Ascending aorta (tissue), 2 donors: ENCODE measurements at regions of chrX and their contacts with region 1.

Region 1: DNA sequence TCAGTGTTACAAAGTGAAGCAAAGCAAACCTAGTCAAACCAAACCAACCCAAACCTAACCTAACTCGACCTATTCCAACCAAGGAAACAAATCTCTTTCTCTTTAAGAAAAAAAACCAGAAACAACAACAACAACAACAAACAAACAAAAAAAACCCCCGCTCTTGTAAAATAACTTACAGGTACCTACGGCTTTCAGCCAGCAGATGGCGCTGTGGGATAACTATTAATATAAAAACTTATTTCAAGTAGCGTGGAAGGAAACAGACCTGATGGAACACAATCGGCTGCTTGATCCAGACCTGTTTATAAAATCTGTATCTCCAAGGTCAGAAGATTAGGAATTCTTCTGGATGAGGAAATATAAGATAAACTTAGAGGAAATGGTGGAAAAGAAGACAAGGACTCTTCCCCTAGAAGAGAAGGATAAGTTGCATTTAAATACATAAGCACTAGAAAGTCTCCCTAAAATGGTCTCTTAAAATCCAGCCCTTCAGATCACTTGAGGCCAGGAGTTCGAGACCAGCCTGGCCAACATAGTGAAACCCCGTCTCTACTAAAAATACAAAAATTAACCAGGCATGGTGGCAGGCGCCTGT is 34.4 kb upstream of the CDKL5 start:
- DNase-seq: peak in 1 of 2 donors; percentile 84
- H3K4me3 ChIP-seq: no peak overlapping the region
- H3K27ac ChIP-seq: no peak overlapping the region
- H3K4me1 ChIP-seq: no peaks in the 10 kb centered on the region
- H3K27me3 ChIP-seq: no peaks in the 10 kb centered on the region
- CTCF ChIP-seq: peak; percentile 62 to 79 (median 63)

Region 2: DNA sequence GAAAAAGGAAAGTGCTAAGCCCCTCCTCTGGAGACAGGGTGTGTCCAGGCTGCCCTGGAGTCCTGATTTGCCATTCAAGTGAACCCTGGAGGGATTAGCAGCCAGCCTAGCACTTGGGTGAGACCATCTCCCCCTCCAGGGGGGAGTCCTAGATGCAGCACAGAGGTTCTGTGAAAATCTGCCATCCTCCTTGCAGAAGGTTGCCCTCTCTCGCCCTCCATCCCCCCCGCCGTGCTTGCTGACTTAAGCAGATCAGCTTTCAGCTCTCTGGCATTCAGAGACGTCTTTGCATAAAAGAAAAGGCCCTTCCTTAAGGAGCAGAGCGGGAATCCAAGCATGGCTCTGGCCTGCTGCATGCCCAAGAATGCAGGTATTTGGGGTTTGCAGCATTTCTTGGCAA is 755.8 kb before region 1 on chrX:
- intact Hi-C with region 1: no loop called
- DNase-seq: no peak
- H3K4me3 ChIP-seq: no peak overlapping the region
- H3K27ac ChIP-seq: no peak overlapping the region
- H3K4me1 ChIP-seq: peaks cover 3 to 4% of the 10 kb centered on the region in 2 donors
- H3K27me3 ChIP-seq: no peaks in the 10 kb centered on the region
- CTCF ChIP-seq: no peak

Region 3: GRCh38 chrX:18895189-18895951 is 504.3 kb after region 1 on chrX:
- intact Hi-C with region 1: loop called (anchors 2 kb)
- DNase-seq: peak in 1 of 2 donors; percentile 89
- H3K4me3 ChIP-seq: peak overlapping the region in 1 of 2 donors; percentile 36
- H3K27ac ChIP-seq: peak overlapping the region; percentile 84 to 85
- H3K4me1 ChIP-seq: peaks cover 0 to 15% of the 10 kb centered on the region in 2 donors
- H3K27me3 ChIP-seq: no peaks in the 10 kb centered on the region
- CTCF ChIP-seq: peak; percentile 61 to 78 (median 63)

Region 4: DNA sequence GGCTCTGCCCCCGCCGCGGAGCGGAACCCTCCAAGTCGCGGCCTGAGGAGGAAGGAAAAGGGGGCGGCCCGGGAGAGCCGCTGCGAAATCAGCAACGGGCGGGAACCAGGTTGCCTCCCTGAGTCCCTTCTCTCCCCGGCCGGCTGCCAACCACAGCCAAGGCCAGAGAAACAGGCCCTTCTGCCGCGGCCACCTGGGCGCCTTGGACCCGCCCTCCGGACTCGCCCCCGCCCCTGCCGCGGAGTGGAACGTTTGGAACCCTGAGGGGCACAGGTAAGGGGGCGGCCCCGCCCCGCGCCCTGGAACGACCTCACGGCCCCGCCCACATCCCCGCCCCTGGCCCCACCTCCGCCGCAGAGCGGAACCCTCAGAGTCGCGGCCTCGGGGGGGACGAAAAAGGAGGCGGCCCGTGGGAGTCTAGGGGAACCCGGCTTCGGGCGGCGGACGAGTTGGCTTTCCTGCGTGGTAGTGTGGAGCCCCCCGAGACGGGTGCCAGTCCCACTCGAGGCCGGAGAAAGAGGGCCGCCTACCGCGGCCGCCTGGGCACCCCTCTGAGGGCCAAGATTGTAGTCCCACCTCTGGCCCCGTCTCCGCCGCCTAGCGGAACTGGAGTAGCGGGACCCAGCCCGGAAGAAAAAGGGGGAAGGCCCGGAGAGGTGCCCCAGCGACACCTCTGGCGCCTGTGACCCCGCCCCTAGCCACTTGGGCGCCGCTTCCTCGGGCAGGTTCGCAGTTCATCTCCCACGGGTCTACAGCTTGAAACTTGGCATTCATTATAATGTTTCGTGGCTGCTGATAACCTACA is 593.5 kb after region 1 on chrX:
- intact Hi-C with region 1: loop called (anchors 10 kb)
- DNase-seq: peak; percentile 13 to 85
- H3K4me3 ChIP-seq: peak overlapping the region; percentile 68 to 73
- H3K27ac ChIP-seq: peak overlapping the region; percentile 74 to 85
- H3K4me1 ChIP-seq: no peaks in the 10 kb centered on the region
- H3K27me3 ChIP-seq: no peaks in the 10 kb centered on the region
- CTCF ChIP-seq: peak; percentile 34 to 57 (median 56)